SK-N-SH (cell line): ENCODE measurements at regions of chrX and their contacts with region 1.

Region 1: DNA sequence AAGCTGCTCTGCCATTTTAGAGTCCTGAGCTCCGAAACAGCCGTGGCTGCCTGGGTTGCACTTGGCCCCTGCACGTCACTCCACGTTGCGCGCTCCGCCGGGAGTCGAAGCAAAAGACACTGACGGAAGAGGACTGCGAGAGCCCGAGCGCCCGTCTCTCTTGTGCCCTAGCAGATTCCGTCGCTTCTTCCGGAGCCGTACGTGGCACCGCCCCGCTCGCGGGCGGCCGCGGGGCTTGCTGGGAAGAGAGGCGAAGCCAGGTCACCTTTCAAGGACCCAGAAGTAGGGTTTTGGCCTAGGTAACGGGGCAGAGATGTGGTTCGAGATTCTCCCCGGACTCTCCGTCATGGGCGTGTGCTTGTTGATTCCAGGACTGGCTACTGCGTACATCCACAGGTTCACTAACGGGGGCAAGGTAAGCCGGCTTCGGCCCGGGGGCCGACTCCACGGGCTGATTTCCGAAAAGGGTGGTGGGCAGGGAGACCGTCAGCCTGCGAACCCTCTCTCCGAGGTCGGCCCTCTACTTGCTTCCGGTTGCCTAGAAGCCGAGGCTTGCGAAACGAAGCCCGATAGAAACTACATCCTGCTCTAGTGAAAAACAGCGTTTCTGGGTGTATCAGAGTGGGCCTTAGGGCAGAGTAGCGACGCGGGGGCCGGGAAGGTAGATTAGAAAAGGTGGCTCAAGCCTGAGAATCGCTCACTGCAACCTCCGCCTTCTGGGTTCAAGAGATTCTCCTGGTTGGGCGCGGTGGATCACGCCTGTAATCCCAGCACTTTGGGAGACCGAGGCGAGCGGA is at the starts of genes NDUFA1 and RNF113A:
- DNase-seq: peak; percentile 77
- H3K4me3 ChIP-seq: peak within 1 kb of the TSS; percentile 59 to 69
- H3K27ac ChIP-seq: peak within 1 kb of the TSS; percentile 84 to 87
- H3K4me1 ChIP-seq: no peaks in the 10 kb centered on the region; a peak in 1 of 4 replicates
- H3K27me3 ChIP-seq: peaks cover 13% of the 10 kb centered on the region; the same call in 1 of the 2 replicates
- CTCF ChIP-seq: no peak
- EP300 ChIP-seq: no peak
- RAD21 ChIP-seq: no peak
- polyA plus RNA-seq, gene NDUFA1: 96.5 and 101 TPM in 2 replicates
- polyA plus RNA-seq, gene RNF113A: 11.8 and 14.8 TPM in 2 replicates

Region 2: DNA sequence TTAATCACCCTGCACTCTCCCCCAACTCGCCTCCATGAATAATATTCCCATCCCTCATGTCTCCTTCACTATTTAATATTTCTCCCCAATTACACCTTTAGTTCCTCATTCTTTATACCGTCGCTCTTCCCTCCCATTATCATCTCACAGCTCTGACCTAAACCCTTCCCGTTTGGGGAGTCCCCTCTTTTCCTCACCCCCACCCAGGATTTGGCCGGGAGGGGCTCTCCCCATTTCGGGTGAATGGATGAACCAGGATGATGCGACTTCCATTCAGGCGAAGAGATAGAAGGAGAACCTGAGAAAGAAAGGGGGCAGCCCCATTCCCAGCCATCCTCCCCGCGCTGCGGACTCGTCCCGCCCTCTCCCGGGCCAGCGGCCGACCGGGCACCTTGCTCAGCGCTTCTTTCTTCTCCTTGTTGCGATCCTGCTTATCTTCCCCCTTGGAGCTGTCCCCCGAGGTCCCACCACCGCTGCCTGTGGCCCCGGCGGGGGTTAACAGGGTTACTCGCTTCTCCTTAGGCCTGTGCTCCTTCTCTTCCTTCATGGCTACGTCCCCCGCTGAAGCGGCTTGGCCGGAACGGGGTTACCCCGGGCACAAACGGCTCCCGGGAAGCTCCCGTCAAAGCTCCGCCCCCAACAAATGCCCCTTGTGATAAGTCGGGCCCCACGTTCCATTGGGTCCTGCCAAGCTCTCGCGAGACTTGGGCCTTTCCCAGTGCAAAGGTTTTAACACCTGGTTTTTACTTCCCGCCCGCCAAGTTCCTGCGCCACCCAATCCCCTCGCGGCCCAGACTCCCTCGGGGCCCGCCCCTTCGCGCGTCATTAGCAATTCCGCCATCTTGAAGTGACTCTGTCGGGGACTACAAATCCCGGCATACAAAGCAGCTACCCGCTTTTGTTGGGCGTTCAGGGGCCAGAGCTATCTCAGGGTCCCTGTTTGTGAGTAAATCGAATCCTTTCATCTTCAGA is 19.1 kb before region 1 on chrX and contains the start of gene UPF3B:
- CTCF ChIA-PET with region 1: interaction called, 4 read pairs
- POLR2A ChIA-PET with region 1: interaction called, 10 read pairs
- DNase-seq: peak; percentile 95
- H3K4me3 ChIP-seq: peak within 1 kb of the TSS; percentile 74 to 96
- H3K27ac ChIP-seq: peak within 1 kb of the TSS; percentile 84 to 85
- H3K4me1 ChIP-seq: peaks cover 0 to 2% of the 10 kb centered on the region in 2 experiments; a peak in 1 of 4 replicates
- H3K27me3 ChIP-seq: peaks cover 20% of the 10 kb centered on the region
- CTCF ChIP-seq: no peak
- EP300 ChIP-seq: no peak; a peak in 1 of 4 replicates
- RAD21 ChIP-seq: no peak
- polyA plus RNA-seq, gene UPF3B: 8.5 and 8.9 TPM in 2 replicates

Region 3: GRCh38 chrX:120111611-120112010 is 239.8 kb after region 1 on chrX:
- CTCF ChIA-PET with region 1: no interaction called
- POLR2A ChIA-PET with region 1: no interaction called
- DNase-seq: no peak
- H3K4me3 ChIP-seq: no peak overlapping the region
- H3K27ac ChIP-seq: no peak overlapping the region
- H3K4me1 ChIP-seq: no peaks in the 10 kb centered on the region
- H3K27me3 ChIP-seq: no peaks in the 10 kb centered on the region; the same call in 1 of the 2 replicates
- CTCF ChIP-seq: no peak
- EP300 ChIP-seq: no peak
- RAD21 ChIP-seq: no peak